HEK293 (cell line): ENCODE measurements at regions of chr12 and their contacts with region 1.

Region 1: GRCh38 chr12:95529787-95530186 is 21.5 kb downstream of the USP44 start:
- H3K4me3 ChIP-seq: no peak overlapping the region
- H3K27ac ChIP-seq: no peak overlapping the region
- H3K4me1 ChIP-seq: no peaks in the 10 kb centered on the region
- CTCF ChIP-seq: no peak

Region 2: DNA sequence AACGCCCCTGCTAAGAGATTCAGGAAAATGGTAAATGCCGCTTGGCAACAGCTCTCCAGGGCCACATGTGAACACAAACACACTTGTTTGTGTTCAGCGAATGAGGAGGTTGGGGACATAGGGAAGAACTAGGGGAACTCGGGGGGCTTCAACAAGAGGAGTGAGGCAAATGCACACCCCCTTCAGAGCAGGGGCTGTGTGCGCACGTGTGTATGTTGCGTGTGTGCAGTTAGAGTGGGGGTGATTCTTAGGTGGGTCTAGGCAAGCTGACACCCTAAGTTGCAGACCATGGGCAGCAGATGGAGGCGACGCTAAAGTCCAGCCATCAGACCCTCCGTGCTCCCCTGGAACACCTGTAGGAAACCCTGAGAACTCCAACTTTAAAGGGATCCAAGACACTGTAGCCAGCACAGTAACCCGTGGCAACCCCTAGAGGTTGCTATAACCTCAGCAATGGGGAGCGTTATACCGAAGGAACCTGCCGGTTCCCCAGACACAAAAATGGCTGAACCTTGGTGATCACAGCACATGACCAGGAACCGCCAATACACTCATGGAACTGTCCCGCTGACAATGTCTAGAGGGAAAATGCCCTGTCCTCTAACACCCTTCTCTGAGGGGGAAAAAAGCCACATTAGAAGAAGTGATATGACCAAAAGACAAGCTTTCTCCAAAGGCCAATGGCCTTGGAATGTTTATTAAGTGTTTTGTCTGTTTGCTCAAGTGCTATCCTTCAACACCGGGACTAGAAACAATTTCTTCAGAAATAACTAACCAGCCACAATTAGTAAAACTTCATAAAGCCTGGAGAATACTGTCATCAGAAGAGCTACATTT is 983.6 kb before region 1 on chr12:
- CTCF ChIA-PET with region 1: interaction called, 12 read pairs
- POLR2A ChIA-PET with region 1: no interaction called
- H3K4me3 ChIP-seq: no peak overlapping the region
- H3K27ac ChIP-seq: no peak overlapping the region
- H3K4me1 ChIP-seq: no peaks in the 10 kb centered on the region; the same call in 1 of the 2 replicates
- CTCF ChIP-seq: peak; percentile 87

Region 3: GRCh38 chr12:95117178-95117599 is 412.6 kb before region 1 on chr12:
- CTCF ChIA-PET with region 1: interaction called, 54 read pairs
- POLR2A ChIA-PET with region 1: interaction called, 4 read pairs
- H3K4me3 ChIP-seq: no peak overlapping the region
- H3K27ac ChIP-seq: no peak overlapping the region
- H3K4me1 ChIP-seq: no peaks in the 10 kb centered on the region
- CTCF ChIP-seq: peak; percentile 53

Region 4: GRCh38 chr12:95217377-95218149 is 312.2 kb before region 1 on chr12 and contains the starts of genes FGD6 and VEZT:
- CTCF ChIA-PET with region 1: interaction called, 14 read pairs
- POLR2A ChIA-PET with region 1: no interaction called
- H3K4me3 ChIP-seq: peak within 1 kb of the TSS; percentile 81
- H3K27ac ChIP-seq: peak within 1 kb of the TSS; percentile 96
- H3K4me1 ChIP-seq: peaks cover 4% of the 10 kb centered on the region
- CTCF ChIP-seq: peak; percentile 80; the same call in 1 of the 2 replicates

Region 5: GRCh38 chr12:95548539-95549391 is 19.0 kb after region 1 on chr12:
- CTCF ChIA-PET with region 1: interaction called, 12 read pairs
- POLR2A ChIA-PET with region 1: interaction called, 3 read pairs
- H3K4me3 ChIP-seq: peak overlapping the region; percentile 82
- H3K27ac ChIP-seq: peak overlapping the region; percentile 75
- H3K4me1 ChIP-seq: peaks cover 30% of the 10 kb centered on the region
- CTCF ChIP-seq: no peak; the same call in 1 of the 2 replicates

Region 6: DNA sequence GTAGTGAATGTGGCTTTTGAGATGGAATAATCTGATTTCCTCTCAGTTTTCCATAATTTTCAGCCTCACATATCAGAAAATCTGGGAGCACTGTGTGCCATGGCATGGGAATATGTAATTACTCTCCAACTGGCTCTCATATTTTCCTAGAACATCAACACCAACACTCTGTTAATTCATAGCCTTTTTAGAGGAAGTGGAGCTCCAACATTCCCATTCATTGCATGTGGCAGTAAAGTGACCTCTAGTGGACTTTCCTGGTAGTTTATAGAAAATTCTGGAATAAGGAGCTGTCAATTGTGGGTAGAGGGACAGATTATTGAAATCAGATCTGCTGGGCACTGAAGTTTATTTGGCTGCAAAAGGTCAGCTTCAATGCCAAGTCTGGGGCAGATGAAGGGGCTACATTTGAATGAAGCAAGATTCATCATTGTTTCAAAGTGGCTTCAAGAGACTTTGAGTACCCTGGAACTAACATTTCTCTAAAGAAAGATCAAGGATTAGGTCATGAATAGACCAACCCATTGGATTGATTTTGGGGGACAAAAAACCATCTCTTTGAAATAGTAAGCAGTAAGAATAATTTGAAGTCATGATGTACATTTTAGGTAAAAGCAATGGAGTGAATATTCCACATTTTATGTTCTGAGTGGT is 45.1 kb after region 1 on chr12:
- CTCF ChIA-PET with region 1: interaction called, 13 read pairs
- POLR2A ChIA-PET with region 1: no interaction called
- H3K4me3 ChIP-seq: no peak overlapping the region
- H3K27ac ChIP-seq: no peak overlapping the region
- H3K4me1 ChIP-seq: no peaks in the 10 kb centered on the region; the same call in 1 of the 2 replicates
- CTCF ChIP-seq: peak; percentile 45; the same call in 1 of the 2 replicates

Region 7: GRCh38 chr12:95820102-95820703 is 290.4 kb after region 1 on chr12:
- CTCF ChIA-PET with region 1: interaction called, 15 read pairs
- POLR2A ChIA-PET with region 1: no interaction called
- H3K4me3 ChIP-seq: no peak overlapping the region
- H3K27ac ChIP-seq: no peak overlapping the region
- H3K4me1 ChIP-seq: no peaks in the 10 kb centered on the region
- CTCF ChIP-seq: peak; percentile 20; the same call in 1 of the 2 replicates